Activated T-helper 1 cell treated with anti-CD3 and anti-CD28 coated beads, Interleukin-12 subunit alpha, Interleukin-12 subunit beta, Interleukin-2, Interleukin-4 antibody, amounts not matched to agents 30 ng/mL and 10 ng/mL and 1 ng/mL, durations not matched to agents 14 hours and 24 hours and 36 hours (primary cell): ENCODE measurements at regions of chr2 and their contacts with region 1.

Region 1: DNA sequence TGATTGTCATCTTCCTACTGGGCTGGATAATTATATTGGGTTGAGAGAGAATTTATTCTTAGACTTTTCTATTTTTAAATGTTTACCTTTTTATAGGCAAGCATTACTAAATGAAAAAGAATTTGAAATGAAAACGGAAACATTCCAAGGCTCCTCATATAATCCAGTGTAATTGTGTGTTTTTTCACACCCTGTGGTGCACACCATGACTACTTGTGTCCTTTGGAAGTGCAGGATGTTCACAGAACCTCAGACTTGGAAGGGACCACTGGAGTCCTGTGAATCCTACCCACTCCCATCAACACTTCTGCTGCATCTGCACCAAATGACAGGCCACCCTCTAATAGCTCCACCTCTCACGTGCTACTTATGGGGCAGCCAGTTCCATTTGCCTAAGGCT is 48.0 kb downstream of the NAT8 start:
- DNase-seq: no peak
- H3K4me3 Mint-ChIP-seq: no peak overlapping the region
- H3K27ac Mint-ChIP-seq: no peak overlapping the region
- H3K4me1 Mint-ChIP-seq: no peaks in the 10 kb centered on the region
- H3K27me3 Mint-ChIP-seq: no peaks in the 10 kb centered on the region

Region 2: DNA sequence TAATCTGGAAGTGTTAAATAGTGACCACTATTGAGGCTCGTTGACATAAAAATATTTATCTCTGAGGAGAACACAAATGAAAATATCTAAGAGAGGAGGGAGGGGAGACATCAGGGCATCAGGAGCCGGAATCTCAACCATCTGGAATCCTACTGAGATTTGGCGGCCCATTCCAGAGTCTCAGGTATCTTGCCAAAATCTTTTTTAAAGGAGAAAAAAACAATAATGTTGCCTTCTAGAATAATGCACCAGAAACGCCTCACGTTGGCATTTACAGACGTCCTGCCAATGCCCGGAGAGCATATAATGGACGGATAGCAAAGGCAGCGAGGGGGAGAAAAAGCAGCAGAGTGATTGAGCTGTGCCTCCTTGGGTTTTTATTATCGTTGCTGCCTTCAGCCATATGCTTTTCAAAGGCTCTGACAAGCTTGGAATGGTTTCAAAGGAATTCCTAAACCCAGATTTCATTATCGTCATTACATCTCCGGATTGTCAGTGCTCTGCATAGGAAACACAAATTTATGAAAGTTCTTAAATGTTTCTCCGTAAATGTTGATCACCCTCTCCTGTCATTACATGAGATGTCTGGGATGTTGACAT is 270.0 kb before region 1 on chr2:
- intact Hi-C with region 1: loop called (anchors 10 kb)
- DNase-seq: no peak
- H3K4me3 Mint-ChIP-seq: no peak overlapping the region
- H3K27ac Mint-ChIP-seq: no peak overlapping the region
- H3K4me1 Mint-ChIP-seq: no peaks in the 10 kb centered on the region
- H3K27me3 Mint-ChIP-seq: peaks cover 8% of the 10 kb centered on the region